ENCODE measurements at regions of chr15 and their contacts with region 1.

Region 1: DNA sequence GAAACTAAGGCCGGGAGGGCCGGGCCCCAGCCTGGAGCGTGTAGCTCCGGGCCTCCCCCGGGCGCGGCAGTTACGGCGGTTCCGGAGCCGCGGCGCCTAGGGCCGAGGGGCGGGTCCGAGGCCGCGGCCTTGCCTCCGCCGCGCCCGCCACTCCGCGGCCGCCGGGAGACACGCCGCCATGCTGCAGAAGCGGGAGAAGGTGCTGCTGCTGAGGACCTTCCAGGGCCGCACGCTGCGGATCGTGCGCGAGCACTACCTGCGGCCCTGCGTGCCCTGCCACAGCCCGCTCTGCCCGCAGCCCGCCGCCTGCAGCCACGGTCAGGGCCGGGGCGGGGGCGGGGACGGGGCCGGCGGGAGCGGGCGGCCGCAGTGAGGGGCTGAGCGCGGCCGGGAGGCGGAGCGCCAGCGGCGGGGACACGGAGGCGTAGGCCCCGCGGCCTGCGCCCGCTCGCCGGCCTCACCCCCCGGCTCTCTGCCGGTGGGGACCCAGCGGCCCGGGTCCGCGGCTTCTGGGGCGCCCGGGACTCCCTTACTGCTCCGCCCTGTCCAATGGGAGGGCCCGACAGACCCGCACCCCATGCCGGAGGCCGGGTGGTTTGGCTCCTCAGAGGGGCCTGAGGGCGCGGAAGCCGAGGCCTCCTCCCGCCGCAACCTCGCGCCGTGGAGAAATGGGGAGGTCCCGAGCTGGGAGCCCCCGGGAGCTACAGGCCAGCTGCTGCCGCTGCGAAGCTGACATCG is at the start of gene DIS3L:
- DNase-seq: peak; percentile 74
- ATAC-seq: peak; percentile 82
- H3K4me3 Mint-ChIP-seq: peak within 1 kb of the TSS; percentile 82
- H3K27ac Mint-ChIP-seq: peak within 1 kb of the TSS; percentile 89
- H3K4me1 Mint-ChIP-seq: peaks cover 28% of the 10 kb centered on the region
- H3K27me3 Mint-ChIP-seq: no peaks in the 10 kb centered on the region
- CTCF ChIP-seq: no peak
- total RNA-seq, gene DIS3L: 23.8 and 27.2 TPM in 2 replicates

Region 2: DNA sequence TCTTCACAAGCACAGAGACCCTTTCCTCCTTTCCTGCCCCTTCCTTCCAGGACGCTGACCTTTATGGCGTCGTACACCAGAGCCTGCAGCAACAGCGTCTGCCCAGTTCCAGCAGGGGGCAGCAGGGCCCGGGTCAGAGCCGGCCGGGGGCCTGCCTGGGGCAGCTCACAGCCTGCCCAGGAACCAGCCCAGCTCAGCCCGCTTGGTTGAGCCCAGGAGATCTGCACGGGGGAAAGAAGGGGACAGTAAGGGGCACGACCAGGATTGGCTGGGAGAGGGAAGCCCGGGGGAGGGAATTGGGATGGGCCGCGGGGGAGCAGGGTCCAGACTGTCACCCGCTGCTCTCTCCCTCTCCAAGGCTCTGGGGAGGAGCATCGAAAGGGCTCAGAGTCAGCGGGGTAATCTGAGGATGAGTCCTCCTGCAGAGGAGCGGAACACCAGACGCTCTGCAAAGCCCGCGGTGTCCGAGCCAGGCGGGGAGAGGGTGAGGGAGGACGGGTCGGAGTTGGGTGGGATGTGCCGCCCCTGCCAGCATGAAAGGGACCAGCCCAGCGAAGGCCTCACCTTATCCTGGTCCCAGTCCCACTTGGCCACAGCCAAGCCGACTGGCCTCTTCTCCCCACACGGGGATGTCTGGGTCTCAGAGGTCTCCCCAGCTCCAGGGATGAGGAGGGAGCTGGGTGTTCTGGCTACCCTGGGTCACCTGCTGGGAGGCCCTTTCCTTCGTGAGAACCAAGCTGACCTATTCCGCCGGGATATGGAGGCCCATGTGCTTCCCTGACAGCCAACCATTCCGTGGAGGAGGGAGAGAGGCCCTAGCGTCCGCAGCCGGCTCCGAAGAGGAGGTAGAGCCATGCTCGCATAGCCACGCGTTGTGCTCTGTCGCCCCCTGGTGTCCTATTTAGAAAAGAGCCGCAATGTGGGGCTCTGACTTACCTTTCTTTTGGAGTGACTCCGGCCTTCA is 908.4 kb before region 1 on chr15:
- CTCF ChIA-PET with region 1: no interaction called
- POLR2A ChIA-PET with region 1: no interaction called
- intact Hi-C with region 1: loop called (anchors 10 kb)
- DNase-seq: peak; percentile 68
- ATAC-seq: peak; percentile 84
- H3K4me3 Mint-ChIP-seq: peak overlapping the region; percentile 89
- H3K27ac Mint-ChIP-seq: no peak overlapping the region
- H3K4me1 Mint-ChIP-seq: peaks cover 10% of the 10 kb centered on the region
- H3K27me3 Mint-ChIP-seq: peaks cover 20% of the 10 kb centered on the region
- CTCF ChIP-seq: peak; percentile 12

Region 3: GRCh38 chr15:65516997-65517865 is 776.4 kb before region 1 on chr15 and contains the start of gene DPP8:
- CTCF ChIA-PET with region 1: no interaction called
- POLR2A ChIA-PET with region 1: interaction called, 10 read pairs
- intact Hi-C with region 1: no loop called
- DNase-seq: peak; percentile 91
- ATAC-seq: peak; percentile 94
- H3K4me3 Mint-ChIP-seq: peak within 1 kb of the TSS; percentile 96
- H3K27ac Mint-ChIP-seq: peak within 1 kb of the TSS; percentile 89
- H3K4me1 Mint-ChIP-seq: peaks cover 37% of the 10 kb centered on the region
- H3K27me3 Mint-ChIP-seq: no peaks in the 10 kb centered on the region
- CTCF ChIP-seq: no peak
- total RNA-seq, gene DPP8: 43.0 and 52.2 TPM in 2 replicates

Region 4: GRCh38 chr15:65595960-65596359 is 697.6 kb before region 1 on chr15:
- CTCF ChIA-PET with region 1: interaction called, 6 read pairs
- POLR2A ChIA-PET with region 1: no interaction called
- intact Hi-C with region 1: loop called (anchors 5 kb)
- DNase-seq: no peak
- ATAC-seq: no peak
- H3K4me3 Mint-ChIP-seq: no peak overlapping the region
- H3K27ac Mint-ChIP-seq: no peak overlapping the region
- H3K4me1 Mint-ChIP-seq: no peaks in the 10 kb centered on the region
- H3K27me3 Mint-ChIP-seq: no peaks in the 10 kb centered on the region
- CTCF ChIP-seq: no peak

Region 5: GRCh38 chr15:66306381-66306780 is 12.8 kb after region 1 on chr15:
- CTCF ChIA-PET with region 1: no interaction called
- POLR2A ChIA-PET with region 1: no interaction called
- intact Hi-C with region 1: no loop called
- DNase-seq: no peak
- ATAC-seq: no peak
- H3K4me3 Mint-ChIP-seq: no peak overlapping the region
- H3K27ac Mint-ChIP-seq: no peak overlapping the region
- H3K4me1 Mint-ChIP-seq: no peaks in the 10 kb centered on the region
- H3K27me3 Mint-ChIP-seq: no peaks in the 10 kb centered on the region
- CTCF ChIP-seq: no peak

Region 6: GRCh38 chr15:66356345-66357236 is 63.0 kb after region 1 on chr15 and contains the start of gene TIPIN:
- CTCF ChIA-PET with region 1: no interaction called
- POLR2A ChIA-PET with region 1: interaction called, 11 read pairs
- intact Hi-C with region 1: loop called (anchors 1 kb)
- DNase-seq: peak; percentile 92
- ATAC-seq: peak; percentile 94
- H3K4me3 Mint-ChIP-seq: peak within 1 kb of the TSS; percentile 98
- H3K27ac Mint-ChIP-seq: peak within 1 kb of the TSS; percentile 95
- H3K4me1 Mint-ChIP-seq: peaks cover 24% of the 10 kb centered on the region
- H3K27me3 Mint-ChIP-seq: no peaks in the 10 kb centered on the region
- CTCF ChIP-seq: no peak
- total RNA-seq, gene TIPIN: 10.8 and 11.5 TPM in 2 replicates